ENCODE measurements at regions of chr3 and their contacts with region 1.

Region 1: DNA sequence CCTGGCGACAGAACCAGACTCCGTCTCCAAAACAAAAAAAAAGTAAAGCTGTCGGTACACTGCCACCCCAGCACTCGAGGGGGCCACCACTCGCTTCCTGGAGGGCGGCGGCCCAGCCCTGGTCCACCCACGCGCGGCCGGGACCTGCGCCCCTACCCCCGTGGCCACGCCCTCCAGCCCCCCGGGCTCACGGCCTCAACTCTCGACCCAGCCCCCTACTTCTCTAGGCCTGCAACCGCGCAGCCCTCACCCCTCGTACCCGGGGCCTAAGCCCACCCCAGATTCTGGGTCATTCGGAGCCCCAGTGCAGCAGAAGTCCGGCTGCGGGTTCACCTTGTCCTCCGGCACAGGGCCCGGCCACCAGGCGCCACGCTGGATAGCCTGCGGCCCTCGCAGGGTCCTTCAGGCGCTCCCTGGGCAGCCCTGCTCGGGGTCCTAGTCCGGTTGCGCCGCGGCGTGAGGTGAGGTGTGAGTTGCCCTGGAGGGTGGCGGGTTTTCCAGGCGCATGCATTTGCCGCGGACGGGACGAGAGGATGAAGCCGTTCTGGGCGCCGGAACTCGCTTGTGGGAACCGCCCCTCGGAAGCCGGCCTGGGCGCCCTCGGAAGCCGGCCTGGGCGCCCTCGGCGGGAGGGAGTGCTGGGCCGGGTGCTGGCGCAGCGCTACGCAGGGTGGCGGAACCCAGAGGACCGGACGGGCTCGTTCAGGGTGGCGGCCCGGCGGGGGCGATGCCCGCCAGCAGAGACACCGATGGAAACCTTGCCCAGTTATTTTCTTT is 32.3 kb downstream of the SPINK8 start:
- DNase-seq: peak; percentile 95
- H3K4me3 ChIP-seq: peak within 1 kb of the TSS; percentile 82
- H3K27ac ChIP-seq: peak within 1 kb of the TSS; percentile 86
- H3K4me1 ChIP-seq: peaks cover 47% of the 10 kb centered on the region
- CTCF ChIP-seq: no peak

Region 2: DNA sequence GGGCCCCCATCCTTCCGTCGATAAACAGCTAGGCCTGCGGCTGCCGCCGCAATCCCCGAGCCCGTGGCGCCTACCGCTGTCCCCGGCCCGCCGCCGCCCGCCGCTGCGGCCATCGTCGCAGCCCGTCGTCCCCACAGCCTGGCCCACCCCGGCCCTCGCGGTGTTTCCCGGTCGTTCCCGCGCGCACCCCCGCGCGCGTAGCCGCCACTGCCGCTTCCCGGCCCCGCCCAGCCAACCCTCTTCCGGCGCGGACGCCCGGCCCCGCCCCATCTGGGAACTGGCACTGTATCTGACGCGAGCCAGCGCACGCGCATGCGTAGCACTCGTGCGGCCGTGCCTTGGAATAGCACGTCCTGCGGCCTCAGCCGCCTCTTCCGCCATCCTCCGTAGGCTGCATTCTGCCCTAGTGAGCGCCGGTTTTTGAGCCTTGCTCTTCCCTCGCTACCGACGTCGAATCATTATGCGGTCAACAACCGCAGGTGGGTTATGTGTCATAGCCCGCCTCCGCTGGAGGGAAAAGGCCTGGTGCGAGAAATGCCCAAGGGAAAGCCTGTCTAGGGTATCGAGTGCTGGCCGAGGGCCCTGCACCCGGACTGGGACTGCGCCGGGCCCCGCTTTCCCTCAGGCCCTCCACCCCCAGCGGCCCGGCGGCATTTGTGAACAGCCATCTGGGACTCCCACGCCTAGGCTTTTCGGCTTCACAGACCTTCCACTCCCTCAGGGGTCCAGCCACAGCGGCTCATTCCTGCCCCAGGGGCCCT is 519.3 kb before region 1 on chr3 and contains the start of gene SMARCC1:
- CTCF ChIA-PET with region 1: no interaction called
- POLR2A ChIA-PET with region 1: no interaction called
- intact Hi-C with region 1: loop called (anchors 5 kb)
- DNase-seq: peak; percentile 99
- H3K4me3 ChIP-seq: peak within 1 kb of the TSS; percentile 96
- H3K27ac ChIP-seq: peak within 1 kb of the TSS; percentile 88
- H3K4me1 ChIP-seq: peaks cover 42% of the 10 kb centered on the region
- CTCF ChIP-seq: no peak
- total RNA-seq, gene SMARCC1: 70.5 and 83.2 TPM in 2 replicates

Region 3: GRCh38 chr3:48188266-48189201 is 112.7 kb before region 1 on chr3 and contains the start of gene CDC25A:
- CTCF ChIA-PET with region 1: interaction called, 16 read pairs
- POLR2A ChIA-PET with region 1: no interaction called
- intact Hi-C with region 1: loop called (anchors 2 kb)
- DNase-seq: peak; percentile 100
- H3K4me3 ChIP-seq: peak within 1 kb of the TSS; percentile 95
- H3K27ac ChIP-seq: peak within 1 kb of the TSS; percentile 87
- H3K4me1 ChIP-seq: peaks cover 34% of the 10 kb centered on the region
- CTCF ChIP-seq: no peak
- total RNA-seq, gene CDC25A: 74.5 and 83.4 TPM in 2 replicates

Region 4: GRCh38 chr3:48240711-48241491 is 60.3 kb before region 1 on chr3 and contains the start of gene ZNF589:
- CTCF ChIA-PET with region 1: no interaction called
- POLR2A ChIA-PET with region 1: no interaction called
- intact Hi-C with region 1: loop called (anchors 2 kb)
- DNase-seq: peak; percentile 97
- H3K4me3 ChIP-seq: peak within 1 kb of the TSS; percentile 88
- H3K27ac ChIP-seq: peak within 1 kb of the TSS; percentile 80
- H3K4me1 ChIP-seq: peaks cover 36% of the 10 kb centered on the region
- CTCF ChIP-seq: peak; percentile 66
- total RNA-seq, gene ZNF589: 61.4 and 62.4 TPM in 2 replicates

Region 5: GRCh38 chr3:48422270-48422669 is 121.1 kb after region 1 on chr3:
- CTCF ChIA-PET with region 1: no interaction called
- POLR2A ChIA-PET with region 1: no interaction called
- intact Hi-C with region 1: no loop called
- DNase-seq: peak; percentile 43
- H3K4me3 ChIP-seq: no peak overlapping the region
- H3K27ac ChIP-seq: no peak overlapping the region
- H3K4me1 ChIP-seq: no peaks in the 10 kb centered on the region
- CTCF ChIP-seq: peak; percentile 63

Region 6: GRCh38 chr3:48556793-48557626 is 255.8 kb after region 1 on chr3 and contains the start of gene PFKFB4:
- CTCF ChIA-PET with region 1: no interaction called
- POLR2A ChIA-PET with region 1: no interaction called
- intact Hi-C with region 1: loop called (anchors 2 kb)
- DNase-seq: peak; percentile 99
- H3K4me3 ChIP-seq: peak within 1 kb of the TSS; percentile 77
- H3K27ac ChIP-seq: peak within 1 kb of the TSS; percentile 80
- H3K4me1 ChIP-seq: peaks cover 54% of the 10 kb centered on the region
- CTCF ChIP-seq: no peak
- total RNA-seq, gene PFKFB4: 3.8 and 5.0 TPM in 2 replicates